ENCODE measurements at regions of chr12 and their contacts with region 1.

Region 1: GRCh38 chr12:662566-663292 is 516 bp downstream of the NINJ2 start:
- DNase-seq: no peak
- ATAC-seq: no peak
- H3K4me3 ChIP-seq: no peak overlapping the region
- H3K27ac ChIP-seq: peak overlapping the region; percentile 17; the same call in 1 of the 2 replicates
- H3K4me1 ChIP-seq: peaks cover 60% of the 10 kb centered on the region
- H3K27me3 ChIP-seq: no peaks in the 10 kb centered on the region
- CTCF ChIP-seq: no peak
- EP300 ChIP-seq: no peak
- POLR2A ChIP-seq: no peak
- RAD21 ChIP-seq: no peak

Region 2: DNA sequence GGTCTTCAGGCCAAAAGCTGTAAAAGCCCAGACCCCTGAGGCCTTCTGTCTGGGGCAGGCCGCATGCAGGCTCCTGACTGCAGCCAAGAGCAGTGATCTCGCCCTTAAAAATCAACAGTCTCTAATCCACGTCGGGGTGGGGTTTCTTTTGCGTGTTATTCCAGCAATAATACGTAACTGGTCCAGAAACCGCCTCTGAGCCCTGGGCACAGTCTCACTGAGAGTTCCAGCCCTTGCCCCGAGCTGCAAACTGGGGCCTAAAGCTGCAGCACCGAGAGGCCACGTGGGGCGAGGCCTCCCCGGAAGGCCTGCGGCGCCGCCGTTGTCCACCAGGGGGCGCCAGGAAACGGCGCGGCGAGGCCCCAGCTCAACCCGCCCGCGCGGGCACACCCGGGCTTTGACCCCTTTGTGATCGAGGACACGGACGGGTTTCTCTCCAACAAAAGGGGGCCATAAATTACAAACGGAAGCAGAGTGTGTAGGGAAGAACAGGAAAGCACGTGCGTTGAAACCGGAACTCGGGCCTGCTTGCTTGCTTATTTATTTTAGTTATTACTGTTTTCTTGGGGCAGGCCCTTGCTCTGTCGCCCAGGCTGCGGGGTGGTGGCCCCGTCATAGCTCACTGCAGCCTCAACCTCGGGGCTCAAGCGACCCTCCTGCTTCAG is 86.6 kb before region 1 on chr12:
- CTCF ChIA-PET with region 1: interaction called, 14 read pairs
- POLR2A ChIA-PET with region 1: interaction called, 11 read pairs
- RAD21 ChIA-PET with region 1: interaction called, 27 read pairs
- SMC1A ChIA-PET with region 1: interaction called, 7 read pairs
- in situ Hi-C with region 1: no loop called
- intact Hi-C with region 1: no loop called
- DNase-seq: peak; percentile 40
- ATAC-seq: peak; percentile 99
- H3K4me3 ChIP-seq: no peak overlapping the region
- H3K27ac ChIP-seq: peak overlapping the region; percentile 26
- H3K4me1 ChIP-seq: peaks cover 10% of the 10 kb centered on the region
- H3K27me3 ChIP-seq: no peaks in the 10 kb centered on the region
- CTCF ChIP-seq: peak; percentile 90 to 99 (median 96)
- EP300 ChIP-seq: no peak
- POLR2A ChIP-seq: peak; percentile 59
- RAD21 ChIP-seq: peak; percentile 79

Region 3: DNA sequence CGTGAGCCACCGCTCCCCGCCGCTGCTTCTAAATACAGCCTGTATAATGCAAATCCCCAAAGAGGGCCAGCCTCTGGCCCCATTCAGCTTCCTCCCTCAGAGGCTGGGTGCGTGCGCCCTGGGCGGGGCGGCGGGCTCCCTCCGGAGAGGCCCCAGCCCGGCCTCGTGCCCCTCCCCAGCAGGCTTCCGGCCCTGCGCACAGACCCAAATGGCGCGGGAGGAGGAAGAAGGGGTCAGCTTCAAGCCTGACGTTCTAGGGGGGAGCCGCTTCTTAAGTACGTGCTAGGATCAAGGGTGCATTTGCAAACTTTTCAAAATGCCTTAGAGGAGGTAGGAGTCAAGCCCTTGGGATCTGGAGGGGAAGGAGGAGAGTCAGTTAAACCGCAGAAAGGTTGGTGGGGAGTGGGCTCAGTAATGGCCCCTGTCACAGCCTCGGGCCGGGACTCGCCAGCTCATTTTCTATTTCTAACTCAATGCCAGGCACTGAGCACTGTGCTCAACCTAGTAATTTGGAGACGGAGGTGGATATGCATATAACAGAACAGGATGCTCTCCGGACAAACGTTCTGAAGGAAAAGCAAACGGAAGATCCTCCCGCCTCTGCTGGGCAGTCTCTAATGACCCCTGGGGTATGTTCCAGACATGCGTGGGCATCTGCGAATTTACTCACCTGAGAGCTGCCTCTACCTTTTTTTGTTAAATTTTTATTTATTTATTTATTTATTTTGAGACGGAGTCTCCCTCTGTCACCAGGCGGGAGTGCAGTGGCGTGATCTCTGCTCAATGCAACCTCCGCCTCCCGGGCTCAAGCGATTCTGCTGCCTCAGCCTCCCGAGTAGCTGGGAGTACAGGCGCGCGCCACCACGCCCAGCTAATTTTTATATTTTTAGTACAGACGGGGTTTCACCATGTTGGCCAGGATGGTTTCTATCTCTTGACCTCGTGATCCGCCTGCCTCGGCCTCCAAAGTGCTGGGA is 31.8 kb before region 1 on chr12:
- CTCF ChIA-PET with region 1: no interaction called
- POLR2A ChIA-PET with region 1: interaction called, 40 read pairs
- RAD21 ChIA-PET with region 1: interaction called, 37 read pairs
- SMC1A ChIA-PET with region 1: interaction called, 38 read pairs
- in situ Hi-C with region 1: no loop called
- intact Hi-C with region 1: no loop called
- DNase-seq: no peak
- ATAC-seq: peak; percentile 98
- H3K4me3 ChIP-seq: peak overlapping the region; percentile 60
- H3K27ac ChIP-seq: peak overlapping the region; percentile 92
- H3K4me1 ChIP-seq: peaks cover 16% of the 10 kb centered on the region
- H3K27me3 ChIP-seq: no peaks in the 10 kb centered on the region
- CTCF ChIP-seq: no peak
- EP300 ChIP-seq: no peak
- POLR2A ChIP-seq: peak; percentile 86
- RAD21 ChIP-seq: no peak

Region 4: GRCh38 chr12:650983-651382 is 11.7 kb before region 1 on chr12:
- CTCF ChIA-PET with region 1: interaction called, 5 read pairs
- POLR2A ChIA-PET with region 1: interaction called, 47 read pairs
- RAD21 ChIA-PET with region 1: interaction called, 49 read pairs
- SMC1A ChIA-PET with region 1: interaction called, 22 read pairs
- in situ Hi-C with region 1: no loop called
- intact Hi-C with region 1: no loop called
- DNase-seq: no peak
- ATAC-seq: peak; percentile 64
- H3K4me3 ChIP-seq: no peak overlapping the region
- H3K27ac ChIP-seq: no peak overlapping the region
- H3K4me1 ChIP-seq: peaks cover 30% of the 10 kb centered on the region
- H3K27me3 ChIP-seq: no peaks in the 10 kb centered on the region
- CTCF ChIP-seq: peak; percentile 27 to 38 (median 31); a peak in 4 of 6 replicates
- EP300 ChIP-seq: no peak
- POLR2A ChIP-seq: no peak
- RAD21 ChIP-seq: peak; percentile 57

Region 5: DNA sequence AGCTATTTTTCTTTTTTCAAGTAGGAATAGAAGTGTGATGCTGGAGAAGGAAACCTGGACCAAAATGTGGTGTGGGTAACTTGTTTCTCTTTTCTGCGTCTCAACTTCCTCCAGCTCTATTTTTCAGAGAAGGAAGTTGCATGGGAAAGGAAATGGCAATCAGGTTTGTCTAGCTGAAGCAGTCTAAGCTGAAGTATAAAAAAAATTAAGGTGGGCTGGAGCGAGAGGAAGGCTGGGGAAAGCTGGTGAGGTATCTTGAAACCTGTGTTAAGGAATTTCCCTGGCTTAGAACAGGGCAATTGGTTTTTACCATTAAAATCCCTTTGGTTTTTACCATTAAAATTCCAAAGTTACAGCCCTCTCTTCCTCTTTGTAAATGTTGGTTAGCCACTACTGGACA is 34.8 kb after region 1 on chr12:
- CTCF ChIA-PET with region 1: no interaction called
- POLR2A ChIA-PET with region 1: no interaction called
- RAD21 ChIA-PET with region 1: no interaction called
- SMC1A ChIA-PET with region 1: no interaction called
- in situ Hi-C with region 1: no loop called
- intact Hi-C with region 1: no loop called
- DNase-seq: no peak
- ATAC-seq: no peak
- H3K4me3 ChIP-seq: no peak overlapping the region
- H3K27ac ChIP-seq: no peak overlapping the region
- H3K4me1 ChIP-seq: no peaks in the 10 kb centered on the region
- H3K27me3 ChIP-seq: no peaks in the 10 kb centered on the region
- CTCF ChIP-seq: no peak
- EP300 ChIP-seq: no peak
- POLR2A ChIP-seq: no peak
- RAD21 ChIP-seq: no peak

Region 6: DNA sequence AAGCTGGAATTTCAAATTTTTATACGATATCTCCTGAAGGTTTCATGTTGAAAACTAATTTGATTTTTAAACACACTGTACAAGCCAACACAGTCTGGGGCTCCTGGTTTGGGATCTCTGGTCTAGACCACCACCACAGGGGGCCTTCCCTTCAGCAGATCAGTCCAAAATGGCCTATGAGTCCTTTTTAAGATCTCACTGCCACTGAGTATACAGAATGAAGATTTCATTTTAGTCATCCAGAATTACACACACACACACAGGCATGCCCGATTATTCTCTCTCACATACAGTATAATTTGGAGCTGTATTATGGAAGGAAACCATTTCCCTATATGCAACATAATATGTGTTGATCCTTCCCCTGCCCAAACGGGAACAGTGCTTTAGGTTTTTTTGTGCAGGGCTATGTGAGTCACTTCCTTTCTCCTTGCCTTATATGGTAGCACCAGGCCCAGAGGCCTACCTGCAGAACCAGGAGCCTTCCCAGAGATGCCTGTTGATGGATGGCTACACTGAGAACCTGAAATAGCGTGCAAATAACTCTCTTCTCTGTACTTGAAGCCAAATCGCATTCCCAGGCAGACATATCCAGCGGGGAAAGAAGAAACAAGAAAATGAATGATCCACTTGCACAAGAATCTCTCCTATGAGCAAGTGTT is 61.6 kb after region 1 on chr12:
- CTCF ChIA-PET with region 1: interaction called, 6 read pairs
- POLR2A ChIA-PET with region 1: interaction called, 20 read pairs
- RAD21 ChIA-PET with region 1: interaction called, 22 read pairs
- SMC1A ChIA-PET with region 1: interaction called, 20 read pairs
- in situ Hi-C with region 1: no loop called
- intact Hi-C with region 1: no loop called
- DNase-seq: no peak
- ATAC-seq: peak; percentile 66
- H3K4me3 ChIP-seq: no peak overlapping the region
- H3K27ac ChIP-seq: peak overlapping the region; percentile 46; the same call in 1 of the 2 replicates
- H3K4me1 ChIP-seq: peaks cover 36% of the 10 kb centered on the region
- H3K27me3 ChIP-seq: no peaks in the 10 kb centered on the region
- CTCF ChIP-seq: no peak
- EP300 ChIP-seq: no peak
- POLR2A ChIP-seq: no peak
- RAD21 ChIP-seq: no peak

Region 7: GRCh38 chr12:779745-780734 is 117.3 kb after region 1 on chr12:
- CTCF ChIA-PET with region 1: no interaction called
- POLR2A ChIA-PET with region 1: interaction called, 12 read pairs
- RAD21 ChIA-PET with region 1: interaction called, 7 read pairs
- SMC1A ChIA-PET with region 1: interaction called, 5 read pairs
- in situ Hi-C with region 1: no loop called
- intact Hi-C with region 1: no loop called
- DNase-seq: no peak
- ATAC-seq: peak; percentile 50
- H3K4me3 ChIP-seq: peak overlapping the region; percentile 50
- H3K27ac ChIP-seq: peak overlapping the region; percentile 46
- H3K4me1 ChIP-seq: peaks cover 22% of the 10 kb centered on the region
- H3K27me3 ChIP-seq: no peaks in the 10 kb centered on the region
- CTCF ChIP-seq: no peak
- EP300 ChIP-seq: no peak
- POLR2A ChIP-seq: no peak
- RAD21 ChIP-seq: no peak

Measured in GM12878 (cell line).